Gastrocnemius medialis (tissue), 4 donors: ENCODE measurements at regions of chr2 and their contacts with region 1.

Region 1: GRCh38 chr2:239035361-239036078 is 187.6 kb downstream of the TWIST2 start:
- DNase-seq: peak in 1 of 2 donors; percentile 42
- ATAC-seq: peak; percentile 75 to 76
- H3K4me3 ChIP-seq: no peak overlapping the region
- H3K27ac ChIP-seq: no peak overlapping the region
- H3K4me1 ChIP-seq: peaks cover 5 to 10% of the 10 kb centered on the region in 2 donors
- H3K27me3 ChIP-seq: peaks cover 0 to 10% (median 6%) of the 10 kb centered on the region in 3 donors
- CTCF ChIP-seq: peak; percentile 43 to 98 (median 83)
- POLR2A ChIP-seq: no peak

Region 2: GRCh38 chr2:239348563-239349447 is 313.3 kb after region 1 on chr2:
- in situ Hi-C with region 1: no loop called
- intact Hi-C with region 1: no loop called
- DNase-seq: peak in 1 of 2 donors; percentile 56
- ATAC-seq: peak; percentile 80
- H3K4me3 ChIP-seq: no peak overlapping the region
- H3K27ac ChIP-seq: peak overlapping the region; percentile 71 to 80 (median 74)
- H3K4me1 ChIP-seq: peaks cover 13 to 15% of the 10 kb centered on the region in 2 donors
- H3K27me3 ChIP-seq: no peaks in the 10 kb centered on the region
- CTCF ChIP-seq: no peak
- POLR2A ChIP-seq: peak in 1 of 2 donors; percentile 9

Region 3: GRCh38 chr2:239882331-239882732 is 846.8 kb after region 1 on chr2:
- in situ Hi-C with region 1: loop called (anchors 10 to 25 kb)
- intact Hi-C with region 1: loop called (anchors 2 kb)
- DNase-seq: peak in 1 of 2 donors; percentile 33
- ATAC-seq: peak; percentile 58 to 79
- H3K4me3 ChIP-seq: no peak overlapping the region
- H3K27ac ChIP-seq: no peak overlapping the region
- H3K4me1 ChIP-seq: peaks cover 0 to 6% of the 10 kb centered on the region in 2 donors
- H3K27me3 ChIP-seq: no peaks in the 10 kb centered on the region
- CTCF ChIP-seq: peak; percentile 45 to 62 (median 59)
- POLR2A ChIP-seq: no peak

Region 4: DNA sequence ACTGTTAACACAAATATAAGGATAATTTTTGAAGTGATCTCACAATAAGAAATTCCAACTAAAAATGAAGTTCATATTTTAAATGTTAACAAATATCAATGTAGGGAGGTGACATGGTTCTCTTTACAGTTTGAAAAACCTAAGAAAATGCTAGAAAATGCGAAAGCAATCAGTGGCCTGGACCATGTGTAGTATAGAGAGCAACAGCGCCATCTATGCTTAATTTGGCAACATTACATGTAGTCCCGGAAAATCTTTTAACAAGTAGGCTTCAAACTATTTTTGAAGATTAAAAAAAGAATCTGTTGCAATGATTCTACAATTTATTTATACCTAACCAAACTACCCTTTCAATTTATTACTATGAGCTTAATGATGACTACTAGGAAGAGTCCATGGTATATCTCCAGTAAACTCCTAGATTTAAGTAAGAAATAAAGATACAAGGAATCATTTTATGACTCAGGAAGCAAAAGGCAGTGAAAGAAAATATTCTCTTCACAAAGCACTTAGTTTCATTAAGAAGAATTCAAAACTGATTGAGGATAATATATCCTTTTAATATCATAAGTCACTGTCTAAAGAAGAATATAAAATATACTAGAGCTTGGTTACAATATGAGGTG is 956.3 kb after region 1 on chr2:
- in situ Hi-C with region 1: loop called in 3 of 4 experiments (anchors 10 to 25 kb)
- intact Hi-C with region 1: loop called (anchors 1 kb)
- DNase-seq: no peak
- ATAC-seq: peak; percentile 39 to 60
- H3K4me3 ChIP-seq: no peak overlapping the region
- H3K27ac ChIP-seq: no peak overlapping the region
- H3K4me1 ChIP-seq: no peaks in the 10 kb centered on the region
- H3K27me3 ChIP-seq: no peaks in the 10 kb centered on the region
- CTCF ChIP-seq: peak; percentile 56 to 86 (median 69)
- POLR2A ChIP-seq: no peak

Region 5: DNA sequence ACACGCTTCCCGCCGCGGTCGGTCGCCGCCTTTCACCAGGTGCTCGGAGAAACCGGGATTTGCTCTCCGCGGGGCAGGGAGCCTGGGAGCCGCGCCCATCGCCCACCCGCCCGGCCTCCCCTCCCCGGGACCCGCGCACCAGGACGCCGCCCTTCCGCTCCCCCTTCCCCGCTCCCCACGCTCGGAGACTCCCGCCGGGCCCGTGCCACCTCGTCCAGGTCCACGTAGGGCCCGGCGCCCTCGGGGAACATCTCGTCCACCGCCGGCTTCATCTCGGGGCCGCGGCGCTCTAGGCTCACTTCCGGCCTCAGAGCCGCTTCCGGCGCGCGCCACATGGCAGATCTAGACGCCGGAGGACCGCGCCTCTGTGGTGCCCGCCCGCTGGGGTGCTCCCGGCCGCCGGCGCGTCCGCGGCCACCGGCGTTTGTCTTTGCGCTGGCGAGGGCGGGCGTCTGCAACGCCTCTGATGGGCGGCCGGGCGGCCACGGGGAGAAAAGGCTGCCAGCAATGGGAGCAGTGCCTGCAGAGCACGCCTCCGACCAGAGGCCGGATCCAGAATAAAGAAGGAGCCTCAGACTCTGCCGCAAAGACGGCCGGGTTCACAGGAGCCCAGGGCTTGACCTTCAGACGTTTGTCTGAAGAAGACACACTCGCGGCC is 1100.6 kb after region 1 on chr2 and contains the start of gene COPS9:
- in situ Hi-C with region 1: loop called in 1 of 4 experiments (anchors 25 kb)
- intact Hi-C with region 1: no loop called
- DNase-seq: peak; percentile 73 to 81
- ATAC-seq: peak; percentile 84 to 93
- H3K4me3 ChIP-seq: peak within 1 kb of the TSS; percentile 75 to 97 (median 90)
- H3K27ac ChIP-seq: peak within 1 kb of the TSS; percentile 71 to 89 (median 82)
- H3K4me1 ChIP-seq: peaks cover 23 to 26% of the 10 kb centered on the region in 2 donors
- H3K27me3 ChIP-seq: no peaks in the 10 kb centered on the region
- CTCF ChIP-seq: peak in 1 of 5 experiments; percentile 6
- POLR2A ChIP-seq: peak; percentile 52 to 72
- total RNA-seq, gene COPS9: 163 to 219 (median 193) TPM